ENCODE measurements at regions of chr12 and their contacts with region 1.

Region 1: GRCh38 chr12:121550974-121551634 is 29.7 kb downstream of the KDM2B start:
- DNase-seq: no peak
- H3K4me3 ChIP-seq: no peak overlapping the region
- CTCF ChIP-seq: no peak

Region 2: GRCh38 chr12:121499929-121500793 is 50.9 kb before region 1 on chr12:
- CTCF ChIA-PET with region 1: interaction called, 10 read pairs
- POLR2A ChIA-PET with region 1: no interaction called
- DNase-seq: no peak
- H3K4me3 ChIP-seq: no peak overlapping the region
- CTCF ChIP-seq: peak; percentile 89

Region 3: GRCh38 chr12:121536899-121537813 is 13.9 kb before region 1 on chr12:
- CTCF ChIA-PET with region 1: interaction called, 50 read pairs
- POLR2A ChIA-PET with region 1: no interaction called
- DNase-seq: no peak
- H3K4me3 ChIP-seq: peak overlapping the region; percentile 49
- CTCF ChIP-seq: no peak

Region 4: GRCh38 chr12:121579981-121580868 is 29.1 kb after region 1 on chr12:
- CTCF ChIA-PET with region 1: interaction called, 13 read pairs
- POLR2A ChIA-PET with region 1: no interaction called
- DNase-seq: no peak
- H3K4me3 ChIP-seq: peak overlapping the region; percentile 61
- CTCF ChIP-seq: no peak

Region 5: GRCh38 chr12:121626087-121626852 is 75.2 kb after region 1 on chr12 and contains the start of gene ORAI1:
- CTCF ChIA-PET with region 1: interaction called, 225 read pairs
- POLR2A ChIA-PET with region 1: no interaction called
- DNase-seq: peak; percentile 16
- H3K4me3 ChIP-seq: peak within 1 kb of the TSS; percentile 69
- CTCF ChIP-seq: peak; percentile 27

Region 6: GRCh38 chr12:121657305-121658008 is 106.4 kb after region 1 on chr12:
- CTCF ChIA-PET with region 1: interaction called, 12 read pairs
- POLR2A ChIA-PET with region 1: interaction called, 4 read pairs
- DNase-seq: no peak
- H3K4me3 ChIP-seq: no peak overlapping the region
- CTCF ChIP-seq: no peak

Region 7: GRCh38 chr12:121678716-121679580 is 127.8 kb after region 1 on chr12:
- CTCF ChIA-PET with region 1: interaction called, 283 read pairs
- POLR2A ChIA-PET with region 1: no interaction called
- DNase-seq: no peak
- H3K4me3 ChIP-seq: no peak overlapping the region
- CTCF ChIP-seq: no peak

Measured in AG04449 (cell line).